ENCODE measurements at regions of chr10 and their contacts with region 1.

Region 1: GRCh38 chr10:110497438-110498086 is at the start of gene DUSP5:
- DNase-seq: peak; percentile 97
- H3K4me3 ChIP-seq: peak within 1 kb of the TSS; percentile 64 to 83 (median 77)
- H3K27ac ChIP-seq: peak within 1 kb of the TSS; percentile 96 to 98 (median 97)
- H3K4me1 ChIP-seq: peaks cover 0 to 79% (median 61%) of the 10 kb centered on the region in 4 donors
- H3K27me3 ChIP-seq: no peaks in the 10 kb centered on the region
- CTCF ChIP-seq: no peak
- EP300 ChIP-seq: peak in 1 of 4 donors; percentile 37
- POLR2A ChIP-seq: peak; percentile 80 to 93
- total RNA-seq, gene DUSP5: 3.6 to 42.1 (median 7.6) TPM

Region 2: DNA sequence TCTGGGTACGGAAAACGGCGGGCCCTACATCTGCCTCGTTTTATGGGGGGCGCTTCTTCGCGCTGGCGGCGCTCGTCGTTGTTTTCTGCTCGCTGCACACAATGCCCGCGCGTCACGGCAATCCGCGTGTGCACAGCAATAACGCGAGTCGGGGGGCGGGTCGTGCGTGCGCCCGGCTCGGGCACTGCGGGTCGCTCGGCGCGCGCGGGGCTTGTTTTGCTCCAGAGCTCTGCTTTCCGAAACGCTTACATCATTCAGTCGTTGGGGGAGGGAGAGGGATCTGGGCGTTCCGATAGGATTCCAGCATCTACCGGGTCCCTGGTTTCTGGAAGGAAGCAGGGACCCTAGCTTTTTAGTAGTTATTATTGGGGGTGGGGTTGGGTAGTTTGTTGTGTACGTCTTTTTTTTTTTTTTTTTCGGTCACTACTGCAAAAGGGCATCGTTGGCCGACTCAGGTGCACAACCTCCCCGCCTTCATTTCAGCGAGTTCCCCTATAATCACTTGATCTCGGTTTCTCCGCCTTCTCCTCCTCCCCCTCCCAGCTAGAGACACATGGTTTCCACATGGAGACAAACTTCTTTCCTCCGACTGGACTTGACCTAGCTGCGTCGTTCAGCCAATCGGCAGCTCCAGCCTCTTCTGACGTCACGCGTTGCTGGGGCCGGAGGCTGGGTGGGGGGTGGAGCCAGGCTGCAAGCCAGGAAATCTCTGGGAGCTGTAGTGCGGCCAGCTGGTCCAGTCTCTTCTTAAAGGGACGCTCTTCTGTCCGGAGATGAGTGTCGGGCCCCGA is 286.7 kb before region 1 on chr10:
- intact Hi-C with region 1: loop called (anchors 2 kb)
- DNase-seq: peak; percentile 99
- H3K4me3 ChIP-seq: peak overlapping the region; percentile 62 to 92 (median 76)
- H3K27ac ChIP-seq: peak overlapping the region; percentile 94 to 100 (median 98)
- H3K4me1 ChIP-seq: peaks cover 0 to 45% (median 35%) of the 10 kb centered on the region in 4 donors
- H3K27me3 ChIP-seq: no peaks in the 10 kb centered on the region
- CTCF ChIP-seq: no peak
- EP300 ChIP-seq: peak in 2 of 4 donors; percentile 39 to 75
- POLR2A ChIP-seq: peak; percentile 73 to 85

Region 3: DNA sequence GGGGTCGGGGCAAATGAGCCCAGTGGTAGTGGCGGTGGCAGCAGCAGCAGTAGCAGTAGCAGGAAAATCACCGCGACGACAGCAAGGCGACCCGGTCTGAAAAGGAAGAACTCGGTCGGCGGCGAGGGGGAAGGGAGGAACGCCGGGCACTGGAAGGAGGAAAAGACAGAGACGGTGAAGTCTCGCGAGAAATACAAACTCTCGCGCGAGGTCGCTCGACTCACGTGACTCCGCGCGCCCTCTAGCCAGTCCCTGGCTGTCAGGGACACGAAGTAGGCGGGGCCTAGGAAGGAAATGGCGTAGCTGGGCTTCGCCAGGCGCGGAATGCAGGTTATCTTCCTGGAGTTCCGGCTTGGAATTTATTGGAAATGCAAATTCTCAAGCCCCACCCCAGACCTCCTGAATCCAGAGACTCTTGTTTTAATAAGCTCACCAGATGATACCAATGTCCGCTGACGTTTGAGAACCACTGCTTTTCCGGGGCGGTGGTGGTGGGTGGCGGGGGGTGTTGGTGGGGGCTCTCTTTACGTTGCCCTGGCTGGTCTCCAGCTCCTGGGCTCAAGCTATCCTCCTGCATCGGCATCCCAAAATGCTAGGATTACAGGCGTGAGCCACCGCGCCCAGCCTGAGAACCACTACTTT is 192.7 kb before region 1 on chr10 and contains the start of gene SMNDC1:
- intact Hi-C with region 1: loop called (anchors 1 kb)
- DNase-seq: peak; percentile 99
- H3K4me3 ChIP-seq: peak within 1 kb of the TSS; percentile 79 to 97 (median 94)
- H3K27ac ChIP-seq: peak within 1 kb of the TSS; percentile 94 to 97 (median 96)
- H3K4me1 ChIP-seq: peaks cover 0 to 47% (median 39%) of the 10 kb centered on the region in 4 donors
- H3K27me3 ChIP-seq: no peaks in the 10 kb centered on the region
- CTCF ChIP-seq: no peak
- EP300 ChIP-seq: peak in 1 of 4 donors; percentile 45
- POLR2A ChIP-seq: peak; percentile 65 to 78
- total RNA-seq, gene SMNDC1: 13.3 to 19.7 (median 14.7) TPM

Region 4: GRCh38 chr10:110547139-110547761 is 49.7 kb after region 1 on chr10:
- intact Hi-C with region 1: loop called (anchors 5 kb)
- DNase-seq: no peak
- H3K4me3 ChIP-seq: no peak overlapping the region
- H3K27ac ChIP-seq: no peak overlapping the region
- H3K4me1 ChIP-seq: peaks cover 0 to 4% (median 0%) of the 10 kb centered on the region in 4 donors
- H3K27me3 ChIP-seq: no peaks in the 10 kb centered on the region
- CTCF ChIP-seq: peak; percentile 63 to 77 (median 70)
- EP300 ChIP-seq: no peak
- POLR2A ChIP-seq: no peak

Region 5: DNA sequence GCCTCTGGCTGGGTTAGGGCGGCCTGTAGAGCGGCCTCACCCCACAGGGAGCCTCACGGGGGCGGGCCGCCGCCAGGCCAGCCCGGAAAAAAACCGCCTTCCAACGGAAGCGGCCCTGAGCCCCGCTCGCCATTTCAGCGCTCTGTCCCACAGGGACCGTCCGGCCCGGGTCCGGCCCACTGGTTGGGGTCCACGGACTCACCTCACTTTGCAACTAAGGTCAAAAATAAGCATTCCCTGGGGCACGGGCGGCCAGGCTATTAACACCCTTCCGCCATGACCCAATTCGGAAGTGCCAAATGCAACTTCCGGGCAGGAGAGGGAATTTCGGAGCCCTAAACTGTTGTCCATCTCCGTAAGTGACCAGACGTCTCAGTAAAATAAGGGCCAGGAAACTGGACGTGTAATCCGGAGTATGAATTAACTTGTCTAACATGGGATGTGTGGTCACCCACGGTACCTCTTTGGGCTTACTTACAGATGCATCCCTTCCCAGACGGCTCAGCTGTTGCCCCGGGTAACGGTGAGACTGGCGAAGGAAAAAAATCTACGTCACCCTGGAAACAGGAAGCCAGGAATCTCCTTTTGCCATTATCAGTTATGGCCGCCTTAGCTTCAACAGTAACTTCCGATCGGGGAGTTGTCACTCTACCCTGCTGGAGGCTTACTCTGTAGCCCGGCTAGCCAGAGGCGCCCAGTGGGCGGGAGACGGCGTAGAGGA is 421.2 kb after region 1 on chr10 and contains the start of gene BBIP1:
- intact Hi-C with region 1: loop called (anchors 10 kb)
- DNase-seq: no peak
- H3K4me3 ChIP-seq: peak within 1 kb of the TSS; percentile 70 to 91 (median 77)
- H3K27ac ChIP-seq: peak within 1 kb of the TSS; percentile 96 to 98 (median 98)
- H3K4me1 ChIP-seq: peaks cover 0 to 45% (median 37%) of the 10 kb centered on the region in 4 donors
- H3K27me3 ChIP-seq: no peaks in the 10 kb centered on the region
- CTCF ChIP-seq: no peak
- EP300 ChIP-seq: peak in 2 of 4 donors; percentile 5 to 9
- POLR2A ChIP-seq: peak; percentile 23 to 39
- total RNA-seq, gene BBIP1: 19.7 to 36.8 (median 27.5) TPM

Region 6: GRCh38 chr10:111186358-111186757 is 688.8 kb after region 1 on chr10:
- intact Hi-C with region 1: no loop called
- DNase-seq: no peak
- H3K4me3 ChIP-seq: no peak overlapping the region
- H3K27ac ChIP-seq: no peak overlapping the region
- H3K4me1 ChIP-seq: no peaks in the 10 kb centered on the region
- H3K27me3 ChIP-seq: no peaks in the 10 kb centered on the region
- CTCF ChIP-seq: no peak
- EP300 ChIP-seq: no peak
- POLR2A ChIP-seq: no peak

Measured in sigmoid colon (tissue), 7 donors.